Adrenal gland (tissue), 19 donors: ENCODE measurements at regions of chr17 and their contacts with region 1.

Region 1: DNA sequence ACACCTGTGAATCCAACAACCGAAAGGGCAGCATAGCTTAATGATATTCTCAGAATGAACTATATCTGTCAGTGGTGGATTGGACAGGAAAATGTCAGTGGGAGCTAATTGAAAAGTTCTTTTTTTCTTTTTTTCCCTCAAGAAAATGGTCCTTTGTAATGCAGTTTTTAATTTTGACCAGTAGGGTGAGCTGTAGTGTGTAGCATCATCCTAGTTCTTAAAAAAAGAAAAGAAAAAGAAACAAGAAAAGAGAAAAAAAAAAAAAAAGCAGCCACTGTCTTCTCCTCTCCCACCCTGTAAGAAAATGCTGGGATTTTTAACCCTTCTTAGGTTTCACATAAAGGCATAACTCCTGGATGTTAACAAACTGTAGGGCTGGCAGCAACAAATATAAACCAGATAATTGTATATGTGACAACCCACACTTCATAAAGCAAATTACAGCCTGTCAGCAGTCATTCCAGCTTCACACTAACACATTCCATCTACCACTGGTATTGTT is 78.1 kb downstream of the SKAP1 start:
- DNase-seq: no peak
- H3K4me3 ChIP-seq: no peak overlapping the region
- H3K27ac ChIP-seq: no peak overlapping the region
- H3K4me1 ChIP-seq: no peaks in the 10 kb centered on the region
- H3K27me3 ChIP-seq: no peaks in the 10 kb centered on the region
- CTCF ChIP-seq: peak; percentile 54 to 80 (median 74)
- POLR2A ChIP-seq: no peak

Region 2: GRCh38 chr17:48441231-48441711 is 89.4 kb after region 1 on chr17:
- intact Hi-C with region 1: no loop called
- DNase-seq: no peak
- H3K4me3 ChIP-seq: no peak overlapping the region
- H3K27ac ChIP-seq: no peak overlapping the region
- H3K4me1 ChIP-seq: peaks cover 17 to 31% of the 10 kb centered on the region in 2 donors
- H3K27me3 ChIP-seq: no peaks in the 10 kb centered on the region
- CTCF ChIP-seq: no peak
- POLR2A ChIP-seq: no peak

Region 3: GRCh38 chr17:48483471-48484131 is 131.7 kb after region 1 on chr17:
- intact Hi-C with region 1: loop called in 1 of 2 experiments (anchors 10 kb)
- DNase-seq: no peak
- H3K4me3 ChIP-seq: no peak overlapping the region
- H3K27ac ChIP-seq: peak overlapping the region in 1 of 5 donors; percentile 5
- H3K4me1 ChIP-seq: no peaks in the 10 kb centered on the region
- H3K27me3 ChIP-seq: no peaks in the 10 kb centered on the region
- CTCF ChIP-seq: no peak
- POLR2A ChIP-seq: no peak